CD4-positive, alpha-beta memory T cell (primary cell): ENCODE measurements at regions of chr5 and their contacts with region 1.

Region 1: DNA sequence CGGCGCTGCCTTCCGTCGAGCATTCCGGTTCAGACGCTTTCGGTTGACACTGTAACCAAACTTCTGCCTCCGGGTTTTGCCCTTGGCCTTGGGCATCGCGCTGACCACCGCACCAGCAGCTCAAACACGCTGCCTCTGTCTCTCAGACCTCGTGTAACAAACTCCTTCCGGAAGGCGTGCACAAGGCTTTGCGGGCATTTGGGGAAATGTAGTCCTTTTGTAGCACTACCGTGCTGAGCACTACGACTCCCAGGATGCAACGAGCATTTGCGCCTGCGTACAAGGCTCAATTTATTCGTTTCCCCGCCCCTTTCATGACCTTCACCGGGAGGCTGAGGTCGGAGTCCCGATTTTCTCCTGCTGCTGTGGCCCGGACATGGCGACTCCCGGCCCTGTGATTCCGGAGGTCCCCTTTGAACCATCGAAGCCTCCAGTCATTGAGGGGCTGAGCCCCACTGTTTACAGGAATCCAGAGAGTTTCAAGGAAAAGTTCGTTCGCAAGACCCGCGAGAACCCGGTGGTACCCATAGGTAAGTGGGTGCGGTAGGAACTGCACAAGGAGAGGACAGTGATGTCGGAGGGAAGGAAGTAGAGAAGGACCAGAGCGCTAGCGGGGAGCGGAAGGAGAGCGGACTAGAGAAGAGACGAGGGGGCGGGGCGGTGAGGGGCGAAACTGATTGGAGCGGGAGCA is at the starts of genes HIGD2A and NOP16:
- DNase-seq: peak; percentile 98 to 100 (median 99)
- H3K4me3 ChIP-seq: peak within 1 kb of the TSS; percentile 90 to 99
- H3K4me3 Mint-ChIP-seq: peak within 1 kb of the TSS; percentile 95 to 100 (median 97)
- H3K27ac ChIP-seq: peak within 1 kb of the TSS; percentile 91
- H3K27ac Mint-ChIP-seq: peak within 1 kb of the TSS; percentile 96 to 100 (median 100)
- H3K4me1 ChIP-seq: peaks cover 33% of the 10 kb centered on the region
- H3K4me1 Mint-ChIP-seq: peaks cover 17 to 45% (median 30%) of the 10 kb centered on the region in 4 donors
- H3K27me3 ChIP-seq: no peaks in the 10 kb centered on the region
- H3K27me3 Mint-ChIP-seq: no peaks in the 10 kb centered on the region
- total RNA-seq, gene HIGD2A: 81.3 to 83.4 TPM
- total RNA-seq, gene NOP16: 16.9 to 19.4 TPM

Region 2: GRCh38 chr5:176361437-176362232 is 27.0 kb before region 1 on chr5 and contains the start of gene KIAA1191:
- CTCF ChIA-PET with region 1: interaction called, 3 read pairs
- POLR2A ChIA-PET with region 1: interaction called, 40 read pairs
- intact Hi-C with region 1: loop called (anchors 1 kb)
- DNase-seq: peak; percentile 93 to 97 (median 94)
- H3K4me3 ChIP-seq: peak within 1 kb of the TSS; percentile 91 to 97
- H3K4me3 Mint-ChIP-seq: peak within 1 kb of the TSS; percentile 97 to 99 (median 98)
- H3K27ac ChIP-seq: peak within 1 kb of the TSS; percentile 78
- H3K27ac Mint-ChIP-seq: peak within 1 kb of the TSS; percentile 92 to 98 (median 97)
- H3K4me1 ChIP-seq: peaks cover 39% of the 10 kb centered on the region
- H3K4me1 Mint-ChIP-seq: peaks cover 27 to 57% (median 42%) of the 10 kb centered on the region in 4 donors
- H3K27me3 ChIP-seq: no peaks in the 10 kb centered on the region
- H3K27me3 Mint-ChIP-seq: no peaks in the 10 kb centered on the region
- total RNA-seq, gene KIAA1191: 73.3 to 76.6 TPM

Region 3: DNA sequence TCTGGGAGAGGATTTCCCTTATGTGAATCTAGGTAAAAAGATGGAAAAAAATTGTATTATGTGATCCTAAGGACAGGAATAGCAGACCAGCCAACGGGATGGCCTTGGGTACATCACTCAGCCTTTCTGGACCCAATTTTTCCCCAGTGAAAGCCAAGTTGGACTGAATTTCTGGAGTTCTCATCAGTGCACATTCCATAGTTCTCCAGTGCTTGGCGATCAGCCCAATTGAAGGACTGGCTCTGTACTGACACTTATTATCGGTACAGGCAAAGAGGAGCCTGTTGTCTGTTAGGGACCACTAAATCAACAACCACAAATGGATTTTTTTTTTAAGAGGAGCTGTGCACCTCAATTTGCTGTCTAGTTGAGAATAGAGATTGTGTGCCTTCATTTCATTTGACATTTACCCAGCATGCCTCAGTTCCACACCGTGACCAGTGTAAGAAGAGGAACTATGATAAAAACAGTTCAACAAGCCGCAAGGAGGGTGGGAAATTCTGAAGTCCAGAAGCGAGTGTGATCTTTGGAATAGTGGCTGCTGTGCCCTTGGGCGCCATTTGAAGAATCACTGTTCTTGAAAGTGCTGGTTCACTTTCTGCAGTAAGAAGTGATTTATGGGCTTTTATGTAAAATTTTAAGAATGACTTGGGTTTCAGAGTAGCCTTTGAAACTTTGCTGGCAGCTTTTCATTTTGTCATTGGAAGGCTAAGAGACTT is 15.3 kb before region 1 on chr5:
- CTCF ChIA-PET with region 1: no interaction called
- POLR2A ChIA-PET with region 1: interaction called, 10 read pairs
- intact Hi-C with region 1: no loop called
- DNase-seq: no peak
- H3K4me3 ChIP-seq: no peak overlapping the region
- H3K4me3 Mint-ChIP-seq: no peak overlapping the region
- H3K27ac ChIP-seq: no peak overlapping the region
- H3K27ac Mint-ChIP-seq: no peak overlapping the region
- H3K4me1 ChIP-seq: no peaks in the 10 kb centered on the region
- H3K4me1 Mint-ChIP-seq: peaks cover 0 to 3% (median under 1%) of the 10 kb centered on the region in 4 donors
- H3K27me3 ChIP-seq: no peaks in the 10 kb centered on the region
- H3K27me3 Mint-ChIP-seq: no peaks in the 10 kb centered on the region

Region 4: GRCh38 chr5:176447982-176448608 is 59.5 kb after region 1 on chr5 and contains the start of gene FAF2:
- CTCF ChIA-PET with region 1: interaction called, 4 read pairs
- POLR2A ChIA-PET with region 1: interaction called, 9 read pairs
- intact Hi-C with region 1: loop called (anchors 1 kb)
- DNase-seq: peak; percentile 97 to 100 (median 99)
- H3K4me3 ChIP-seq: peak within 1 kb of the TSS; percentile 95 to 100
- H3K4me3 Mint-ChIP-seq: peak within 1 kb of the TSS; percentile 97 to 100 (median 98)
- H3K27ac ChIP-seq: peak within 1 kb of the TSS; percentile 98
- H3K27ac Mint-ChIP-seq: peak within 1 kb of the TSS; percentile 98 to 100 (median 99)
- H3K4me1 ChIP-seq: peaks cover 42% of the 10 kb centered on the region
- H3K4me1 Mint-ChIP-seq: peaks cover 21 to 51% (median 36%) of the 10 kb centered on the region in 4 donors
- H3K27me3 ChIP-seq: no peaks in the 10 kb centered on the region
- H3K27me3 Mint-ChIP-seq: peaks cover 0 to 2% of the 10 kb centered on the region in 2 donors
- total RNA-seq, gene FAF2: 32.3 to 33.6 TPM

Region 5: DNA sequence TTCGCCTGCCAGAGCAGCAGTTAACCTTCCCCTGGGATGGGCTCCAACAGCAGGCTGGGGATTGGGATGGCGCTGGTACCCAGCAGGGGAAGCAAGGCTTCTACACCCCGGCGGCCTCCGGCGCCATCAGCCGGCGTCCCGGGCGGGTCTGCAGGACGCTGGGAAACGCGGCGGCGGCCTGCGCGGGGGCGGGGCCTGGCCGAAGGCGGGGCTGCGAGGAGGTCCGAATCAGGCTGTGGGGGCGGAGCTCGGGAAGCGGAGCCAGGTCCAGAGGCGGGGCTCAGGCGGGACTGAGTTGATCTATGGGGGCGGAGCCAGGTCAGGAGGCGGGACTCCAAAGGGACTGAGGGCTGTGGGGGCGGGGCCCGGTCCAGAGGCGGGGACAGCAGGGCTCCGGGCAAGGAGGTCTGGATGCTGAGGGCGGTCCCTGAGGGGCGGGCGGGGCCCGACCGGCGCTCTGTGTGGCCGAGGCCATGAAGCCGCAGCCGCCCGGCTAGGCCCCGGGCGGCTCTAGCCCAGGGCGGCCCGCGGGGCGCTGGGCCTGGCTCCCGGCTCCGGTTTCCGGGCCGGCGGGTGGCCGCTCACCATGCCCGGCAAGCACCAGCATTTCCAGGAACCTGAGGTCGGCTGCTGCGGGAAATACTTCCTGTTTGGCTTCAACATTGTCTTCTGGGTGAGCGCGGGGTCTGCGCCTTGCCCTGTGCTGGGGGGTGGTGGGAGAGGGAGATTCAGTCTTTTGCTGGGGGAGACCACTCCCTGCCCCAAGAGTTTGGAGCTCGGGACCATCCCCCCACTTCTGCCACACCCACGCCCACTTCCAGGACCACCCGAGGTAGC is 258.7 kb after region 1 on chr5 and contains the start of gene TSPAN17:
- CTCF ChIA-PET with region 1: no interaction called
- POLR2A ChIA-PET with region 1: no interaction called
- intact Hi-C with region 1: loop called (anchors 1 kb)
- DNase-seq: peak; percentile 94 to 97 (median 95)
- H3K4me3 ChIP-seq: peak within 1 kb of the TSS; percentile 73 to 76
- H3K4me3 Mint-ChIP-seq: peak within 1 kb of the TSS; percentile 85 to 94 (median 90)
- H3K27ac ChIP-seq: peak within 1 kb of the TSS; percentile 62
- H3K27ac Mint-ChIP-seq: peak within 1 kb of the TSS; percentile 80 to 95 (median 93)
- H3K4me1 ChIP-seq: peaks cover 50% of the 10 kb centered on the region
- H3K4me1 Mint-ChIP-seq: peaks cover 31 to 69% (median 43%) of the 10 kb centered on the region in 4 donors
- H3K27me3 ChIP-seq: no peaks in the 10 kb centered on the region
- H3K27me3 Mint-ChIP-seq: no peaks in the 10 kb centered on the region
- total RNA-seq, gene TSPAN17: 27.4 to 30.7 TPM

Region 6: GRCh38 chr5:176803940-176804498 is 415.4 kb after region 1 on chr5:
- CTCF ChIA-PET with region 1: no interaction called
- POLR2A ChIA-PET with region 1: no interaction called
- intact Hi-C with region 1: no loop called
- DNase-seq: no peak
- H3K4me3 ChIP-seq: no peak overlapping the region
- H3K4me3 Mint-ChIP-seq: no peak overlapping the region
- H3K27ac ChIP-seq: no peak overlapping the region
- H3K27ac Mint-ChIP-seq: no peak overlapping the region
- H3K4me1 ChIP-seq: no peaks in the 10 kb centered on the region
- H3K4me1 Mint-ChIP-seq: peaks cover 0 to 2% (median under 1%) of the 10 kb centered on the region in 4 donors
- H3K27me3 ChIP-seq: peaks cover 3% of the 10 kb centered on the region
- H3K27me3 Mint-ChIP-seq: peaks cover 26 to 49% of the 10 kb centered on the region in 2 donors